MCF 10A (cell line): ENCODE measurements at regions of chr3 and their contacts with region 1.

Region 1: DNA sequence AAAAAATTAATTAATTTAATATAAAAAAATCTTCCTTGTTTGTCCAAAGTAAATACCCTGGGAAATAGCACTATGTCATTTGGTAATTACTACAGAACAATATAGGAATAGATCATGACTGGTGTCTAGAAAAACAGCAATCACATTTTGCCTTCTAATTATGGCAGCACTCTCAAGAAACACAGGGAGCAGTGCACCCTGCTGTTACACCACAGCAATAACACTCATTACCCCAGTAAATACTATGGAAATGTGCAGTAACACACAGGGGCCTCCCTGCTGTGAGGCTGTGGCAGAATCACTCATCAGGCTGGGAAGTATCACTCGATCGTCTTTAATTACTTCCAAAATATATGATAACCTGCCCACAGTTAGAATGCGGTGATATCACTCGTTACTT is 646.0 kb downstream of the TUSC7 start:
- DNase-seq: peak; percentile 22
- H3K4me3 Mint-ChIP-seq: no peak overlapping the region
- H3K27ac Mint-ChIP-seq: no peak overlapping the region
- H3K4me1 Mint-ChIP-seq: no peaks in the 10 kb centered on the region
- H3K27me3 Mint-ChIP-seq: peaks cover 12% of the 10 kb centered on the region
- CTCF ChIP-seq: peak; percentile 29

Region 2: DNA sequence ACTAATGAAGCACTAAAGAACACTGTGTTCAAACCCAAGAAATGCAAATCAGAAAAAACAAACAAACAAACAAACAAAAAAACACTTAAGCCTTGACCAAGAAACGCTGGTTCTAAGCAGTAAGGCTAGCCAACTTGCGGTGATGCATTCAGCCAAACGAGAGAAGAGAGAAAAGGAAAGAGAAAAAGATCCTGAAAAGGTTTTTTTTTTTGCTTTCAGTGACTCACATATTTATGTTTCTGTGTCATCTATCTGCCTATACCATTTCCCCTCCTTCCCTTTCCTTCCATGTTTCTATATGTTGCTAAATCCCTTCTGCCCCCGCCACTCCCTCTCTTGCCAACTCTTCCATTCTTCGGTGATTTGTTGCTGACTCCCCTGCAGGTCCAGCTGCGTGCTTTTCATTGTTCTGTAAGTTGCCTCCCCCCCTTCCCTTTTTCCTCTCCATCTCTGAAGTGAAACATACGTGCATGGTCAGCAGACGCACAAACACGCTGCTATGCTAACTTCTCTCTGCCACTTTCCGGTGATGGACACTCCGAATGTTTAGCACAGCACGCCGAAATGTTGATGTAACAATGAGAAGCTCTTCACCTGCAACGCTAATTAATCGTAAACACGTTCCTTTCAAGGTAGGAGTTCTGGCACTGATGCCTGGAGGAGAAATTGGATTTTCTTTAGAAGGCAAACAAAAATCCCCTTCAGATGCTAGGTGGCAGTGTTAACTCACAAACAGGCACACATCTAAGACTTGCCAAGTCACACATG is 491.6 kb before region 1 on chr3:
- CTCF ChIA-PET with region 1: no interaction called
- POLR2A ChIA-PET with region 1: no interaction called
- intact Hi-C with region 1: loop called (anchors 10 kb)
- DNase-seq: peak; percentile 51
- H3K4me3 Mint-ChIP-seq: no peak overlapping the region
- H3K27ac Mint-ChIP-seq: no peak overlapping the region
- H3K4me1 Mint-ChIP-seq: no peaks in the 10 kb centered on the region
- H3K27me3 Mint-ChIP-seq: no peaks in the 10 kb centered on the region
- CTCF ChIP-seq: peak; percentile 46

Region 3: DNA sequence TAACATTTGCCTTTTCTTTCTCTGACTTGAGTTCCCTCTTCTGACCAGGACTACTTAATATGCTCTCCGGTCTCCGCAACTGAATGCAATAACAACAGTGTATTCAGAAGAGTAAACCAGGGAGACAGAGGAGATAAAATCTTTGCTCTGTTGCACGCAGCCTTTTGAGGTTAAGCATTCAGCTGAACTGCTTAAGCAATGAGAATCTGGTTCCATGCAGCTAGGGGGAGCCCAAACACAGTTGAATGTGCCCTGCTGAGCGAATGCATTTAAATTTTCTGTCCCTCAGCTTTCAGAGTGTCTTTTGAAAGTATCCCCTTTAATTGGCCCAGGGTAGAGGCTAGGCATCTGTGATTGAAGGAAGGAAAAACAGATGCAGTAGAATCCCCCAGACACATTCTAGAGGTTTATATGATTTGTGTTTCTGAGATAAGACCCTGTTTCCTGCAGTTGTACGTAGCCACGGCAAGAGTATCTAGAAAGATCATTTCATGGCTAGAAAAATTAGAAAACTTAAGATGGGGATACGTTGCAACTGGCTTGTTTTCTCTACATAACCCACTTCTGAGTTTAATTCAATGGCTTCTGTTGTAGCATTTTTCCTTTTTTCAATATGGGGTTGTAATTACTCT is 336.4 kb before region 1 on chr3:
- CTCF ChIA-PET with region 1: no interaction called
- POLR2A ChIA-PET with region 1: no interaction called
- intact Hi-C with region 1: loop called (anchors 10 kb)
- DNase-seq: peak; percentile 60
- H3K4me3 Mint-ChIP-seq: no peak overlapping the region
- H3K27ac Mint-ChIP-seq: no peak overlapping the region
- H3K4me1 Mint-ChIP-seq: no peaks in the 10 kb centered on the region
- H3K27me3 Mint-ChIP-seq: peaks cover 83% of the 10 kb centered on the region
- CTCF ChIP-seq: peak; percentile 74